ENCODE measurements at regions of chr16 and their contacts with region 1.

Region 1: GRCh38 chr16:81444448-81445121 is at the start of gene CMIP:
- DNase-seq: peak; percentile 83 to 89 (median 86)
- H3K4me3 ChIP-seq: peak within 1 kb of the TSS; percentile 92 to 94 (median 94)
- H3K4me3 Mint-ChIP-seq: peak within 1 kb of the TSS; percentile 99
- H3K27ac ChIP-seq: peak within 1 kb of the TSS; percentile 87 to 97
- H3K27ac Mint-ChIP-seq: peak within 1 kb of the TSS; percentile 92 to 99 (median 96)
- H3K4me1 ChIP-seq: peaks cover 42 to 47% of the 10 kb centered on the region in 2 donors
- H3K4me1 Mint-ChIP-seq: peaks cover 46% of the 10 kb centered on the region
- H3K27me3 ChIP-seq: peaks cover 0 to 4% of the 10 kb centered on the region in 2 donors
- H3K27me3 Mint-ChIP-seq: peaks cover 8 to 27% (median 10%) of the 10 kb centered on the region in 3 donors
- CTCF ChIP-seq: no peak
- polyA plus RNA-seq, gene CMIP: 0.85 to 61.9 (median 0.93) TPM

Region 2: DNA sequence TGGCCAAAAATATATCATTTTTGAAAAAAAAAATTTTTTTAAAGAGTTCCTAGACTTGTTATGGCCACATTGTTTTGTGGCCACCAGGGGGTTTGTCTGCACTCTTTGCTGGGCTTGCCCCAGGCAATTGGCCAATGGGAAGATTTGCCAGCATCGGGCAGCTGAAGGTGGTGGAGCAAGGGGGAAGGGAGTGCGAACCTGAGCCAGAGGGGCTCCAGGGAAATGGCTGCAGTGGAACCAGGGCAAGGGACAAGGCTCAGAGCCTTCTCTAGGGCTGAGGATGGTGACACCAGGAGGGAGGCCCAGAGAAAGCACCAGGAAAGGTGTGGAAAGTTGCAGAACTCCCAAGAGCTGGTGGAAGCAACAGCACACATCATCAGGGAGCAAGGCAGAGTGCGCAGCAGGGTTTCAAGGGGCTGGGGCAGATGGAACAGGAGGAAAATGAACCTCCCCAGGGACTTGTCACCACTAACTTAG is 15.5 kb before region 1 on chr16:
- intact Hi-C with region 1: loop called in 1 of 2 experiments (anchors 2 kb)
- DNase-seq: peak; percentile 62 to 76 (median 69)
- H3K4me3 ChIP-seq: no peak overlapping the region
- H3K4me3 Mint-ChIP-seq: peak overlapping the region in 1 of 2 donors; percentile 52
- H3K27ac ChIP-seq: no peak overlapping the region
- H3K27ac Mint-ChIP-seq: peak overlapping the region in 3 of 7 donors; percentile 33 to 59 (median 50)
- H3K4me1 ChIP-seq: peaks cover 47 to 57% of the 10 kb centered on the region in 2 donors
- H3K4me1 Mint-ChIP-seq: peaks cover 54% of the 10 kb centered on the region
- H3K27me3 ChIP-seq: no peaks in the 10 kb centered on the region
- H3K27me3 Mint-ChIP-seq: peaks cover 0 to 8% (median 4%) of the 10 kb centered on the region in 3 donors
- CTCF ChIP-seq: peak; percentile 82

Region 3: DNA sequence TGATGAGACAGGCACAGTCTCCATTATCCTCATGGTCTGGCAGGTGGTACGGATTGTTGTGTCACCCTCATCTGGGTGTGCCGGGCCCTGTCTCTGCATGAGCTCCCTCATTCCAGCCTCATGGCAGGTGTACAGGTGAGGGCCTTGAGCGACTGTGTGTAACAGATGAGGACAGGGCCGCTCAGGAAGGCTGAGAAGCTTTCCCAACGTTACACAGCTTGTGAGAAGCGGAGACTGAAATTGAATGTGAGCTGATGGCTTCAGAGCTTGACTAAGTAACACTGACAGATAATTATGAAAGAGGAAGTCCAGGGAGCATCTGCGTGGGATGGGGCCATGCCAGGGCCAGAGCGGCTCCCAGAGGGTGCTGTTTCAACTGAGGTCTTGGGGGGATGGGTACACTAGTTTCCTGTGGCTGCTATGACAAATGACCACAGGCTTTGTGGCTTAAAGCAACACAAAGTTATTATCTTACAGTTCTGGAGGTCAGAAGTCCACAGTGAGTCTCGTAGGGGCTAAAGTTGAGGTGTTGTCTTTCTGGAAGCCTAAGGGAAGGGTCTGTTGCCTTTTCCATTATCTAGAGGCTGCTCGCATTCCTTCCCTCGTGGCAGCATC is 36.7 kb after region 1 on chr16:
- intact Hi-C with region 1: loop called (anchors 2 to 5 kb)
- DNase-seq: peak; percentile 96 to 98 (median 97)
- H3K4me3 ChIP-seq: peak overlapping the region in 2 of 3 experiments; percentile 12 to 56
- H3K4me3 Mint-ChIP-seq: peak overlapping the region; percentile 63 to 82
- H3K27ac ChIP-seq: peak overlapping the region; percentile 93 to 99
- H3K27ac Mint-ChIP-seq: peak overlapping the region; percentile 98 to 100 (median 99)
- H3K4me1 ChIP-seq: peaks cover 98% of the 10 kb centered on the region in 2 donors
- H3K4me1 Mint-ChIP-seq: peaks cover 97% of the 10 kb centered on the region
- H3K27me3 ChIP-seq: no peaks in the 10 kb centered on the region
- H3K27me3 Mint-ChIP-seq: peaks cover 0 to 5% (median 2%) of the 10 kb centered on the region in 3 donors
- CTCF ChIP-seq: no peak

Region 4: DNA sequence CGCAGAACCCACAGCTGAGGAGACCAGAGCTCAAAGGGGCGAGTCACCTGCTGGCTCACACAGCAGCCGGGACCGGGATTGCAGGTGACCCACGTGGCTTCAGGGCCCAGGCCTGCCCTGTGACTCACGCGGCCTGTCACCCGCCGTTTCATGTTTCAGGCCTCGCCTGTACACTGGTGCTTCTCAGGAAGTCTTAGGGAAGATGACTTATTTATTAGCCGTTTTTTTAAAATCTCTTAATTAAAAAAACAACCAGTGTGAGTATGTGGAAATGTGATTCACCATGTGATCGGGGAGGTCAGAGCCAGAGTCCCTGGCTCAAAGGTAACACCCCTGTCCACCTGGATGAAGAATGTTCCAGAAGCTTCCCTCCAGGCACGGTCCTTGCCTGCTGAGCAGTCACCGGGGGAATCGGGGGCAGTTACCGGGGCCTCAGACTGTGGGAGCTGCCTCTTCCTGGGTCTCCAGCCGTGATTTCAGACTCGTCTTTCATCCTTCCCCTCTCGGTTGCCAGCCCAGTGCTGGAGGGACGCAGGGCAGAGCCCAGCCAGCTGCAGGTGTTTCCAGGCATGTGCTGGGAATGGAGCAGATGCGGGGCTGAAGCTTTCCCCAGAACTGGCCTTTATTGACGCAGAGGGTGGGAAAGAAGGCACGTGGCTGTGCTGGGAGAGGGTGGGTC is 49.3 kb after region 1 on chr16:
- intact Hi-C with region 1: loop called in 1 of 2 experiments (anchors 2 kb)
- DNase-seq: peak; percentile 68 to 88 (median 70)
- H3K4me3 ChIP-seq: no peak overlapping the region
- H3K4me3 Mint-ChIP-seq: no peak overlapping the region
- H3K27ac ChIP-seq: peak overlapping the region; percentile 15 to 46
- H3K27ac Mint-ChIP-seq: peak overlapping the region; percentile 58 to 86 (median 82)
- H3K4me1 ChIP-seq: peaks cover 85 to 100% of the 10 kb centered on the region in 2 donors
- H3K4me1 Mint-ChIP-seq: peaks cover 94% of the 10 kb centered on the region
- H3K27me3 ChIP-seq: no peaks in the 10 kb centered on the region
- H3K27me3 Mint-ChIP-seq: peaks cover 0 to 1% (median under 1%) of the 10 kb centered on the region in 3 donors
- CTCF ChIP-seq: no peak

Region 5: DNA sequence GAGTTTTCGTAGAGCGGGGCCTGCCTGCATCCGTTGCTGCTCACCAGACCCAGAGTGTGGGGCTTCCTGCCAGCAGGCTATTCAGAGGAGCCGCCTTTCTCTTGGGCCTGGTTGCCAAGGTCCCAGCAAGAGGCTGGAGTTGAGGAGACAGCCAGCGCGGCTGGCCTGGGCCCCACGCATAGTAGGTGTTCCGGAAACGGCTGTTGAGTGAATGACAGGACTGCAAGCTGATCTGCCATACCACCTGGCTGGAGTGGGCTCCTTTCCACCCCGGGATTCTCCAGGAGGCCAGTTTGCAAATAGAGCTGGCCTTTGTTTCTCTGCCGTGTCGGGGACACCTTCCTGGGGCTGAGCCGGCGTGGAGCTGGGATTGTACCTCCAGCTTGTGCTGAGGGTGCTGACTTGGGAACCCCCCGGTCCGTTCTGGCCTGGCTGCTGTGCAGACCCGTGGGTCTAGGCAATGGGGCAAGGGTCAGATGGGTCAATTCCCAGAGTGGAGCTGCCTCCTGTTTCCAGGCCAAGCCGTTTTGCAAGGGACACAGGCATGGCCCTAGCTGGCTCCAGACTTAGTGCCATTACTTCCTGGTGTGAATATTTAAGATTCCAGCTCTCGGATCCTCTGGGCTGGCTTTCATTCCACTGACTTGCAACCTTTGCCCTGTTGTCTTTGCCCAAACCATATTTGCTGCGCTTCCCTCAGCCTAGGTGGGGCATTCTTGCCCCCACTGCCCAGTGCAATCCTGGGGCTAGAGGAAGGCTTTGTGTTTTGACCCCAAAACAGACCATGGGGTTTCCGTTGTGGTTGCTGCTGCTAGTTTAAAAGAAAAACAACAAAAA is 68.8 kb after region 1 on chr16:
- intact Hi-C with region 1: no loop called
- DNase-seq: no peak
- H3K4me3 ChIP-seq: peak overlapping the region in 1 of 3 experiments; percentile 22
- H3K4me3 Mint-ChIP-seq: peak overlapping the region; percentile 16 to 72
- H3K27ac ChIP-seq: peak overlapping the region; percentile 10 to 53
- H3K27ac Mint-ChIP-seq: peak overlapping the region in 6 of 7 donors; percentile 1 to 84 (median 70)
- H3K4me1 ChIP-seq: peaks cover 22 to 39% of the 10 kb centered on the region in 2 donors
- H3K4me1 Mint-ChIP-seq: peaks cover 51% of the 10 kb centered on the region
- H3K27me3 ChIP-seq: no peaks in the 10 kb centered on the region
- H3K27me3 Mint-ChIP-seq: peaks cover 0 to 3% (median 2%) of the 10 kb centered on the region in 3 donors
- CTCF ChIP-seq: no peak

Region 6: GRCh38 chr16:82936941-82937551 is 1492.5 kb after region 1 on chr16:
- intact Hi-C with region 1: no loop called
- DNase-seq: no peak
- H3K4me3 ChIP-seq: no peak overlapping the region
- H3K4me3 Mint-ChIP-seq: no peak overlapping the region
- H3K27ac ChIP-seq: no peak overlapping the region
- H3K27ac Mint-ChIP-seq: no peak overlapping the region
- H3K4me1 ChIP-seq: no peaks in the 10 kb centered on the region
- H3K4me1 Mint-ChIP-seq: no peaks in the 10 kb centered on the region
- H3K27me3 ChIP-seq: no peaks in the 10 kb centered on the region
- H3K27me3 Mint-ChIP-seq: peaks cover 0 to 4% (median 3%) of the 10 kb centered on the region in 3 donors
- CTCF ChIP-seq: no peak